Gastrocnemius medialis (tissue), 4 donors: ENCODE measurements at regions of chr6 and their contacts with region 1.

Region 1: DNA sequence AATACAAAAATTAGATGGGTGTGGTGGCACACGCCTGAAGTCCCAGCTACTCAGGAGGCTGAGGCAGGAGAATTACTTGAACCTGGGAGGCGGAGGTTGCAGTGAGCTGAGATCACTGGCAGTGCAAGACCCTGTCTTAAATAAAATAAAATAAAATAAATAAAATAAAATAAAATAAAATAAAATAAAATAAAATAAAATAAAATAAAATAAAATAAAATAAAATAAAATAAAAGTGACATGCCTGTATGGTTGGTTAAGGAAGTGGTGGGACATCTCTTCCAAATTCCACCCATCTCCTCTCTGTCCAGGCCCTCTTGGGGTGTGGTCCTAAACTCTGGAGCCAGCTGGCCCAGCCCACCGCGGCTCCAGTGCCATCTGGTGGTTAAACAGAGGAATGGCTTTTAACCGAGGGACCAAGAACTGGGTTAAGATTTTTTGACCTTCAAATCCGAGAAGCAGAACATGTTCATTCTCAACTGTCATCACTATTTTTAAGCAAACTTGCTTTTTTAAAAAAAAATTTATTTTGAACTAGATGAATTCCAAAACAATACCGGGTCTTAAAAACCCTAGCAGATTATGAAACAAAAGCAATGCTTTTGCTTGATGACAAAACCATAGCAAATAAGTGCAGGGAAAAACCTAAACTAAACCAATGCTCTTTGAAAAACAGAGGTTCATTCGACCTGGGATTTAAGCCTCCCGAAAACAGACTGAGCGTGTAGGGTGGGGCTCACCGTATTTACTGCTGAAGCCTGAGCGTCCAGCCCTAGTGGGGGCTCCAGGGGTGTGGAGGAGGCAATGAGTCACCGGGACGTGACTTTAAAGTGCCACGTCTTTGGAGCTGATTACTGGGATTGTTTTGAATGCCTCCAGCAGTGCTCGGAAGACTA is 68.8 kb downstream of the CDC5L start:
- DNase-seq: peak in 1 of 2 donors; percentile 30
- ATAC-seq: peak; percentile 46 to 64
- H3K4me3 ChIP-seq: no peak overlapping the region
- H3K27ac ChIP-seq: no peak overlapping the region
- H3K4me1 ChIP-seq: peaks cover 5 to 7% of the 10 kb centered on the region in 2 donors
- H3K27me3 ChIP-seq: no peaks in the 10 kb centered on the region
- CTCF ChIP-seq: peak; percentile 55 to 89 (median 80)
- POLR2A ChIP-seq: no peak

Region 2: DNA sequence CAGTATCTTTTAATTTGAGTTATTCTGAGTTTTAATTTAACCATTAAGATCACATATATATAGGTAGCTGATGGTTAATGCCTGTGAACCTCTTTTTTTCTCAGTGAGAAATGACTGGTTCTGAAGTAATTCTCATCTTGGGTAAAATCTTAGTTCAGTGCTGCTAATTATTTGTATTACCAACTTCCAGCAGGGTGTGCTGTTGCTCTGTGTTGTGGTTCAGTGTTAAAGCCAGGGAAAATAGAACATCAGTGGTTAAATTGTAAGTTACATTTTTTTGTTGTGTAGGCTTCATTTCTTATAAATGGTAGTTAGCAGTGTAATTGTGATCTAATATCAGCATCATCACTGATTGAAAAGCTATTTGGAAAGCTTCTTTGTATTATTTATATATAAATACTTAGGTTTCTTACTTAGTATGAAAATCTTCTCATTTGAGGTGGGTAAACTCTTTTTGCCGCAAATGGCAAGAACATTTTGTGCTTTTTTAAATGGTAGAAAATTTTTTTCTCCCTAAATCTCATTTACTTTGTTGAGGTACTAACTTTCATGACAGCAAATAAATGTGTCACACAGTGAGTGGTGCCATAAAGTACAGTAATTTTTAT is 25.1 kb before region 1 on chr6:
- in situ Hi-C with region 1: no loop called
- intact Hi-C with region 1: loop called (anchors 1 kb)
- DNase-seq: no peak
- ATAC-seq: peak; percentile 76 to 77
- H3K4me3 ChIP-seq: no peak overlapping the region
- H3K27ac ChIP-seq: peak overlapping the region in 2 of 4 donors; percentile 47 to 66
- H3K4me1 ChIP-seq: peaks cover 28 to 32% of the 10 kb centered on the region in 2 donors
- H3K27me3 ChIP-seq: no peaks in the 10 kb centered on the region
- CTCF ChIP-seq: peak; percentile 47 to 88 (median 74)
- POLR2A ChIP-seq: no peak

Region 3: GRCh38 chr6:45922728-45923351 is 1466.5 kb after region 1 on chr6:
- in situ Hi-C with region 1: loop called in 1 of 4 experiments (anchors 25 kb)
- intact Hi-C with region 1: no loop called
- DNase-seq: peak; percentile 52 to 58
- ATAC-seq: peak; percentile 62 to 74
- H3K4me3 ChIP-seq: no peak overlapping the region
- H3K27ac ChIP-seq: peak overlapping the region in 2 of 4 donors; percentile 7 to 29
- H3K4me1 ChIP-seq: peaks cover 12 to 24% of the 10 kb centered on the region in 2 donors
- H3K27me3 ChIP-seq: no peaks in the 10 kb centered on the region
- CTCF ChIP-seq: peak; percentile 49 to 66 (median 57)
- POLR2A ChIP-seq: no peak